Heart right ventricle (tissue), 16 donors: ENCODE measurements at regions of chr5 and their contacts with region 1.

Region 1: GRCh38 chr5:52989781-52990527 is 802 bp downstream of the ITGA2 start:
- DNase-seq: peak; percentile 15 to 33
- ATAC-seq: peak; percentile 45 to 87 (median 78)
- H3K4me3 ChIP-seq: peak overlapping the region; percentile 41 to 75 (median 63)
- H3K27ac ChIP-seq: peak overlapping the region in 4 of 10 donors; percentile 4 to 51 (median 26)
- H3K4me1 ChIP-seq: peaks cover 0 to 28% (median 15%) of the 10 kb centered on the region in 9 donors
- H3K27me3 ChIP-seq: peaks cover 0 to 14% (median 0%) of the 10 kb centered on the region in 7 donors
- CTCF ChIP-seq: peak in 6 of 9 donors; percentile 18 to 54 (median 40)

Region 2: GRCh38 chr5:52948418-52949076 is 41.4 kb before region 1 on chr5:
- intact Hi-C with region 1: loop called in 1 of 10 experiments (anchors 5 kb)
- DNase-seq: peak in 1 of 2 donors; percentile 64
- ATAC-seq: peak; percentile 78 to 96 (median 88)
- H3K4me3 ChIP-seq: no peak overlapping the region
- H3K27ac ChIP-seq: peak overlapping the region in 3 of 10 donors; percentile 1 to 28 (median 17)
- H3K4me1 ChIP-seq: peaks cover 0 to 22% (median 5%) of the 10 kb centered on the region in 9 donors
- H3K27me3 ChIP-seq: no peaks in the 10 kb centered on the region
- CTCF ChIP-seq: peak in 8 of 9 donors; percentile 37 to 80 (median 76)

Region 3: GRCh38 chr5:53027913-53028312 is 38.0 kb after region 1 on chr5:
- intact Hi-C with region 1: loop called in 2 of 10 experiments (anchors 5 to 10 kb)
- DNase-seq: peak; percentile 38 to 52
- ATAC-seq: peak in 5 of 8 donors; percentile 23 to 78 (median 70)
- H3K4me3 ChIP-seq: no peak overlapping the region
- H3K27ac ChIP-seq: peak overlapping the region in 1 of 10 donors; percentile 21
- H3K4me1 ChIP-seq: peaks cover 0 to 62% (median 16%) of the 10 kb centered on the region in 9 donors
- H3K27me3 ChIP-seq: no peaks in the 10 kb centered on the region
- CTCF ChIP-seq: no peak

Region 4: GRCh38 chr5:53035868-53036381 is 46.0 kb after region 1 on chr5:
- intact Hi-C with region 1: loop called in 1 of 10 experiments (anchors 10 kb)
- DNase-seq: no peak
- ATAC-seq: no peak
- H3K4me3 ChIP-seq: no peak overlapping the region
- H3K27ac ChIP-seq: peak overlapping the region in 1 of 10 donors; percentile 35
- H3K4me1 ChIP-seq: peaks cover 2 to 44% (median 20%) of the 10 kb centered on the region in 9 donors
- H3K27me3 ChIP-seq: no peaks in the 10 kb centered on the region
- CTCF ChIP-seq: peak in 4 of 9 donors; percentile 5 to 25 (median 14)

Region 5: DNA sequence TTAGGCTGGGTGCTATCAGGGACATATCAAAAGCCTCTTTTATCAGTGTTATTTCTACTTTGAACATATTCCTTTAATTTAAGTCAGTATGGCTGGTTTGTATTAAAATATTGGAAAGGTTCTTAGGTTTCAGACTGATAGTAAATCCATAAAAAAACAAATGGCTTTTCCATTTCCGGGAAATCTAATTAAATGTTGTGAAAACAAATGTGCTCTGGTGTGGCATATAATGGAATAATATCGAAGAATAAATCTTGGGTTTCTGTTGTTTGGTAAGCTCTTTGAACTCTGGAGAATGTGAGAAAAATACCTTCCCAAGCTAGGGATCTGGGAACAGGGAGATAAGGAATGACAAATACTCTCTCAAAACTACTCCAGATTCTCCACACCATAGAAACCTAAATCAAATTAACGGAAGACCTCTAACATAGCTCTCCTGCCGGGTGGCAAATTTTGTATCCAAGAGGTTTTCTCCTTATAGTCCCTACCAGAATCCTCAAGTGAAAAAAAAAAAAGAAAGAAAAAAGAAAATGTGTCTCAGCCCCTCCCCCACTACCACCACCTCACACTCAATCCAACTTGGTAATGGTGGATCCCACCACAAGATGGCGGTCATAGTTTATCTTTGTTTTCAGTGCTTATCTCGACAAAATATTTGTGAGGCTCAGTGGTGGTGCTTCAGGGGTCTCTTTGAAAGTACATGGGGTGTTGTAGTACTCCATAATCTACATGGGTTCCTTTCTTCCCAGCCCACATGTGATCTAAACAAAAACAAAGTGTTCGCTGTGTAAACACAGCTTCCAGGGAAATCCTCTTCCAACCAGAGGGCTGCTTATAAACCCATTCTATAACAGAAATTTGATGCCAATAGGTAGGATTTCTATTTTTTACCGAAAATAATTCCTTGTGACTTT is 435.9 kb after region 1 on chr5:
- intact Hi-C with region 1: no loop called
- DNase-seq: no peak
- ATAC-seq: no peak
- H3K4me3 ChIP-seq: no peak overlapping the region
- H3K27ac ChIP-seq: no peak overlapping the region
- H3K4me1 ChIP-seq: peaks cover 0 to 7% (median 0%) of the 10 kb centered on the region in 9 donors
- H3K27me3 ChIP-seq: no peaks in the 10 kb centered on the region
- CTCF ChIP-seq: peak in 6 of 9 donors; percentile 13 to 45 (median 27)